HAP-1 (cell line): ENCODE measurements at regions of chr22 and their contacts with region 1.

Region 1: GRCh38 chr22:33209930-33210784 is 152.0 kb upstream of the SYN3 start:
- DNase-seq: peak; percentile 59 to 71
- H3K4me3 ChIP-seq: no peak overlapping the region
- H3K4me1 ChIP-seq: no peaks in the 10 kb centered on the region
- H3K27me3 ChIP-seq: peaks cover 7% of the 10 kb centered on the region; the same call in 1 of the 2 replicates

Region 2: DNA sequence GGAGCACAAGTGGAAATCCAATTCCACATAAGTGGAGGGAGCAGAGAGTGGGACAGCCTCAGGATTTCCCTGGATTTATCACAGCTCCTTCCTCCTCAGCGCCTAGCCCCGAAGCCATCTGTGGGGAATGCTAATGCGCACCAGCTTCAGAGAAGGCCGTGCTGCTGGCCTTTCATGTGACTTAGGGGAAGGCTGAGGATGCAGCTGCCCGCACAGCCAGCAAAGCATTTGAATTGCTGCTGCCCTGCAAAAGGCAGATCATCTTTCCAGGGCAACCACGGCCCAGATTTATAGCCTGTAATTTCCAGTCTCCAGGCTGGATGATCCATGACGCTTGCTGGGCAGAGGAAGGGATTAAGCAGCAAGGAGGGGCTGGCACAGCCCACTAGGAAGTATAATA is 181.9 kb before region 1 on chr22:
- in situ Hi-C with region 1: loop called (anchors 10 kb)
- DNase-seq: no peak
- H3K4me3 ChIP-seq: no peak overlapping the region
- H3K4me1 ChIP-seq: peaks cover 10% of the 10 kb centered on the region
- H3K27me3 ChIP-seq: no peaks in the 10 kb centered on the region